ENCODE measurements at regions of chr20 and their contacts with region 1.

Region 1: DNA sequence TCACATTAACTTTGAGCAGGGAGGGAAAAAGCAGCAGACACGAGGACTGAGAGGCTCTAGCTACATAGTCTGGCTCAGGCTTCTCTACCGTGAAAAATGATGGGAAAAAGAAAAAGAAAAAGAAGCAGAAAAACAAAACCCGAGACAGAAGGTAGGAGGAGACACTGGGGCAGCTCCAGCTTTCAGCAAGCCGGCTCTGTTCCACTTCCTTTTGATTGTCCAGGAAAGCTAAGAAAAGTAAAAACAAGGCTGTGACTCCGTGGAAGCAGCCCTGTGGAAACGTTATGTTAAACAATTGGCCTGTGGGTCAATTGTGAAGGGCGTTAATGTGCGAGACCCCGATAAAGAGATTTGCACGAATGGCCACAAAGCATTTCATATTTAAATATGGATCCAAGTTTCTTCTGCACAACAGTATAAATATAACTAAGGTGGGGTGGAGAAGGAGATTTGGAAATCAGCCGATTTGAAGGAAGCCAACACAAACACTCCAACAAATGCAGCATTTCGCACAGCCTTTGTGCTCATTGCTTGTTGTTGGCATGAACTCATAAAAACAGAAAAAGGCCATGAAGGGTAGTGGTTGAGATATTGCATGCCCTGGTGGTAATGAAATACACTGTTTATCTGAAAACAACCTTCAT is 236.9 kb upstream of the JAG1 start:
- DNase-seq: peak in 3 of 5 donors; percentile 26 to 46 (median 36)
- ATAC-seq: peak; percentile 60 to 84 (median 74)
- H3K4me3 ChIP-seq: peak overlapping the region in 6 of 12 donors; percentile 1 to 28 (median 22)
- H3K27ac ChIP-seq: peak overlapping the region; percentile 29 to 80 (median 54)
- H3K4me1 ChIP-seq: peaks cover 0 to 23% (median 3%) of the 10 kb centered on the region in 12 donors
- H3K27me3 ChIP-seq: no peaks in the 10 kb centered on the region
- CTCF ChIP-seq: peak in 8 of 12 donors; percentile 2 to 57 (median 32)
- POLR2A ChIP-seq: no peak

Region 2: GRCh38 chr20:10747019-10747418 is 163.6 kb before region 1 on chr20:
- intact Hi-C with region 1: loop called in 1 of 10 experiments (anchors 5 kb)
- DNase-seq: peak in 2 of 5 donors; percentile 20 to 26
- ATAC-seq: peak; percentile 47 to 80 (median 56)
- H3K4me3 ChIP-seq: peak overlapping the region in 1 of 12 donors; percentile 10
- H3K27ac ChIP-seq: peak overlapping the region; percentile 12 to 81 (median 61)
- H3K4me1 ChIP-seq: peaks cover 0 to 33% (median 6%) of the 10 kb centered on the region in 12 donors
- H3K27me3 ChIP-seq: no peaks in the 10 kb centered on the region
- CTCF ChIP-seq: no peak
- POLR2A ChIP-seq: no peak

Region 3: DNA sequence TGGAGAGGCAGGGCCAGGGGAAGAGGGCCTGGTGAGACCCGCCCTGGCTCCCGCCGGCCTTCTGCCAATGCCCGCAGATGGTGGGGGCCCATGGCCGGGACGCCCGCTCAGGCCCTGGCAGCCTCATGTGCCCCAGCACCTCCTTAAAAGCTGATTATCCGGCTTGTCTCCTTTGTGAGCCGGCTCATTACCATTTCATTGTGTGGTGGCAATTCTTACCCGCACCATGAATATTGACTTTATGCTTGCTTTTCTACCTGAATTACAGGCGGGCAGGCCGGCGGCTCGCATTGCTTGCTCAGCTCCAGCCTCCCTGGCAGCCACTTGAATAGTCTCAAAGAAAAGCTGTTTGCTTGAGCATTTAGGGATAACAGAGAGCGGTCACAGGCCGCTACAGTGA is 116.9 kb before region 1 on chr20:
- intact Hi-C with region 1: no loop called
- DNase-seq: no peak
- ATAC-seq: no peak
- H3K4me3 ChIP-seq: no peak overlapping the region
- H3K27ac ChIP-seq: no peak overlapping the region
- H3K4me1 ChIP-seq: peaks cover 0 to 7% (median 0%) of the 10 kb centered on the region in 12 donors
- H3K27me3 ChIP-seq: no peaks in the 10 kb centered on the region
- CTCF ChIP-seq: no peak
- POLR2A ChIP-seq: no peak

Measured in heart left ventricle (tissue), 16 donors.